Activated CD8-positive, alpha-beta T cell treated with anti-CD3 and anti-CD28 coated beads, Interleukin-2, amount 10 ng/mL, durations not matched to agents 7 days and 5 days (primary cell): ENCODE measurements at regions of chr7 and their contacts with region 1.

Region 1: DNA sequence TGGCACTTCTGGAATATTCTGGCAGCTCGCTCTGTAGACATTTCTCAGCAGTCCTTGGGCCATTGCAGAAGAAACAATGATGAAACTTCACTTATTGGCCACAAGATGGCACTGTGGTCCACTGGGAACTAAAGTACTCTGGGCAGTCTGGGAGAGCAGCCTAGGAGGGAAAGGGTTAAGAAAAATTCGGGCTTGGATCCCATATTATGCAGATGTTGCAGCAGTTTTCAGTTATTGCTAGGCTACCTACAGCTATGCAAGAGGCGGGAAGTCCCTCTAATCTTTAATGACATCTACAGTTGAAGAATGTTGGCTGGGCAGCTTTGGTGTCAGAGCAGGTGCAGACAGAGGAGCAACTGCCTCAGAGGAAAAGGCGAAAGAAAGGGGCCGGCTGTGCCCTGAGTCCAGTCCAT is 201.7 kb upstream of the PRSS58 start:
- DNase-seq: peak; percentile 52
- ATAC-seq: peak; percentile 64
- H3K4me3 Mint-ChIP-seq: no peak overlapping the region
- H3K27ac Mint-ChIP-seq: no peak overlapping the region
- H3K4me1 Mint-ChIP-seq: peaks cover 54% of the 10 kb centered on the region
- H3K27me3 Mint-ChIP-seq: peaks cover 2% of the 10 kb centered on the region

Region 2: DNA sequence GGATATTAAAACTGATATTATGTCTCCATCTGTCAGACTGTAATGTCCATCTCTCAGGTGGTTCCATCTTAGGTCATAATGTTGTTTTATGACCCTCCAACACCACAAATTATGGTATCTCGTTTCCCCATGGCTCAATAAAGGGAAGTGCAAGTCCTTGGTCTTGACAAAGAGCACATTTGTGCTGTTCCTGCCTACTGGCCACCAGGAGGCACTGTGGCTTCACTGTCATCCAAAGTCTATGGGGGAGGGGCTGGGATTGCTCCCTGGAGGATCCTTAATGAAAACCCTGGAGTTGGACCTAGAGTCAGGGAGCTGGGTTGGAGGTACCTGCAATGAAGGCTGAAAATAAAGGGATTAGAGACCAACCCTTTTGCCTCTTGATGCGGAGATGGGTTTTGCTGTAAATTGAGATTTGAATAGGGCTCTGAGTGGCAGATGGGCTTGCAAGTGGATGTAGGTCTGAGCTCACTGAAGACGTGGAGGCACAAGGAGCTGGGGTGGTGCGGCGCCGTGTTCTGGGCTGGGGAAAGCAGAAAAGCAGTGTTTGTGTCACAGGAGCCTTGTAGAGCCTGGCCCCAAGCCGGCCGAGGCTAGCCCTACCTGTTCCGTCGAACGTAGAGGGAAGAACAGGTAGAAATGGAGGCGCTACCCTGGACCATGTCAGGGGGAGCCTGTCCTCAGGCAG is 21.2 kb before region 1 on chr7:
- CTCF ChIA-PET with region 1: interaction called, 27 read pairs
- POLR2A ChIA-PET with region 1: no interaction called
- DNase-seq: peak; percentile 51
- ATAC-seq: no peak
- H3K4me3 Mint-ChIP-seq: no peak overlapping the region
- H3K27ac Mint-ChIP-seq: no peak overlapping the region
- H3K4me1 Mint-ChIP-seq: peaks cover 56% of the 10 kb centered on the region
- H3K27me3 Mint-ChIP-seq: no peaks in the 10 kb centered on the region

Region 3: GRCh38 chr7:142469696-142470543 is 10.4 kb after region 1 on chr7:
- CTCF ChIA-PET with region 1: interaction called, 14 read pairs
- POLR2A ChIA-PET with region 1: no interaction called
- DNase-seq: no peak
- ATAC-seq: no peak
- H3K4me3 Mint-ChIP-seq: no peak overlapping the region
- H3K27ac Mint-ChIP-seq: no peak overlapping the region
- H3K4me1 Mint-ChIP-seq: peaks cover 35% of the 10 kb centered on the region
- H3K27me3 Mint-ChIP-seq: peaks cover 6% of the 10 kb centered on the region

Region 4: GRCh38 chr7:142496545-142497041 is 37.0 kb after region 1 on chr7:
- CTCF ChIA-PET with region 1: interaction called, 32 read pairs
- POLR2A ChIA-PET with region 1: no interaction called
- DNase-seq: peak; percentile 33
- ATAC-seq: peak; percentile 59
- H3K4me3 Mint-ChIP-seq: peak overlapping the region; percentile 16
- H3K27ac Mint-ChIP-seq: no peak overlapping the region
- H3K4me1 Mint-ChIP-seq: peaks cover 47% of the 10 kb centered on the region
- H3K27me3 Mint-ChIP-seq: peaks cover 3% of the 10 kb centered on the region

Region 5: GRCh38 chr7:142523821-142524460 is 64.4 kb after region 1 on chr7:
- CTCF ChIA-PET with region 1: interaction called, 17 read pairs
- POLR2A ChIA-PET with region 1: no interaction called
- DNase-seq: no peak
- ATAC-seq: no peak
- H3K4me3 Mint-ChIP-seq: no peak overlapping the region
- H3K27ac Mint-ChIP-seq: no peak overlapping the region
- H3K4me1 Mint-ChIP-seq: peaks cover 9% of the 10 kb centered on the region
- H3K27me3 Mint-ChIP-seq: peaks cover 3% of the 10 kb centered on the region

Region 6: DNA sequence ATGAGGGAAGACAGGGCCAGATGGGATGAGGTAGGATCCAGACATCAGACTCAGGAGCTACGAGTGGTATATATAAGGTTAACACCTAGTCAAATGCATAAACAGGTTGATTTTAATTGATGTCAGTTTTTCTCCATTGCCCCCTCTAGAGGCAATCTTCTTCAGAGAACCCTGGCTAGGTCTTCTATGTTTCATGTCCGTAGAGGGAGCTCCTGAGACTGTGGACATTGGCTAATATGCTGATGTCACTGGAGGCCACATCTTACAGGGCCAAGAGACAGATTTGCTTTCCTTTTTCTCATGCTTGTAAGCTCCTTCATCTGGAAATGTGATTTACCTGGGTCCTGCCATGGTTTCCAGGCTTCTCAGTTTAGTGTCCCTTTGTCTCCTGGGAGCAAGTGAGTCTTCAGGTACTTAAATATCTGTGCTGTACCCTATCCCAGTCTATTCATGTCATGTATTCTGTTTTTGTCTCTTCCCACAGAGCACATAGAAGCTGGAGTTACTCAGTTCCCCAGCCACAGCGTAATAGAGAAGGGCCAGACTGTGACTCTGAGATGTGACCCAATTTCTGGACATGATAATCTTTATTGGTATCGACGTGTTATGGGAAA is 128.1 kb after region 1 on chr7:
- CTCF ChIA-PET with region 1: interaction called, 11 read pairs
- POLR2A ChIA-PET with region 1: no interaction called
- DNase-seq: peak; percentile 43
- ATAC-seq: peak; percentile 89
- H3K4me3 Mint-ChIP-seq: peak overlapping the region; percentile 17
- H3K27ac Mint-ChIP-seq: no peak overlapping the region
- H3K4me1 Mint-ChIP-seq: no peaks in the 10 kb centered on the region
- H3K27me3 Mint-ChIP-seq: no peaks in the 10 kb centered on the region